Activated CD4-positive, alpha-beta memory T cell treated with anti-CD3 and anti-CD28 coated beads for 36 hours (primary cell): ENCODE measurements at regions of chrX and their contacts with region 1.

Region 1: GRCh38 chrX:153649178-153649914 is 2.3 kb downstream of the DUSP9 start:
- DNase-seq: peak; percentile 49
- H3K4me3 Mint-ChIP-seq: no peak overlapping the region
- H3K27ac Mint-ChIP-seq: no peak overlapping the region
- H3K4me1 Mint-ChIP-seq: no peaks in the 10 kb centered on the region
- H3K27me3 Mint-ChIP-seq: peaks cover 18% of the 10 kb centered on the region

Region 2: GRCh38 chrX:153539171-153539978 is 110.0 kb before region 1 on chrX:
- CTCF ChIA-PET with region 1: interaction called, 28 read pairs
- POLR2A ChIA-PET with region 1: interaction called, 3 read pairs
- intact Hi-C with region 1: no loop called
- DNase-seq: peak; percentile 69
- H3K4me3 Mint-ChIP-seq: no peak overlapping the region
- H3K27ac Mint-ChIP-seq: no peak overlapping the region
- H3K4me1 Mint-ChIP-seq: no peaks in the 10 kb centered on the region
- H3K27me3 Mint-ChIP-seq: peaks cover 2% of the 10 kb centered on the region

Region 3: GRCh38 chrX:153554519-153555167 is 94.7 kb before region 1 on chrX:
- CTCF ChIA-PET with region 1: interaction called, 12 read pairs
- POLR2A ChIA-PET with region 1: no interaction called
- intact Hi-C with region 1: loop called (anchors 5 kb)
- DNase-seq: peak; percentile 70
- H3K4me3 Mint-ChIP-seq: no peak overlapping the region
- H3K27ac Mint-ChIP-seq: no peak overlapping the region
- H3K4me1 Mint-ChIP-seq: no peaks in the 10 kb centered on the region
- H3K27me3 Mint-ChIP-seq: no peaks in the 10 kb centered on the region

Region 4: DNA sequence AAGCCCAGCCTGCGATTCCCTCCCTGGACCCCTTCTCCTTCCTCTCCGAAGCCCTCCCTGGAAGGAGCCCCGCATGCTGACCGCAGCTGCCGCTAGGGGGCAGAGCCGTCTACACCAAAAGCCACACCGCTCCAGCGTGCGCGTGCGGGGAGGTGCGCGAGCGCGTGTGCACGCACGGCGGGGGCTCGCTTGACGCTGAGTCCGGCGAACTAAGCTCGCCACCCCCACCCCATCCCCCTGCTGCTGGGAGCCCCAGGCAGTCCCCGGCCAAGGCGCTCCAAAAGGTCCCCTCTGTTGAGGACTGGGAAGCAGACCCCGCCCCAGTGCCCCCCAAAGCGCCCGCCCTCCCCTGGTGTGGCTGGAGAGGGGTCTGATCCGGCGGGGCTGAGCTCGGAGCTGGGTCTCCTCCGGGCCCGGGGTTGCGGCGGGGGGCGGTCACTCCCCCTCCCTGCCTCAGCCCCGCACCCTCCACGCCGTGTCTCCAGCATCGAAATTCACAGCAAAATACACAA is 39.4 kb before region 1 on chrX:
- CTCF ChIA-PET with region 1: interaction called, 17 read pairs
- POLR2A ChIA-PET with region 1: no interaction called
- intact Hi-C with region 1: loop called (anchors 5 kb)
- DNase-seq: peak; percentile 82
- H3K4me3 Mint-ChIP-seq: peak overlapping the region; percentile 71
- H3K27ac Mint-ChIP-seq: no peak overlapping the region
- H3K4me1 Mint-ChIP-seq: peaks cover 9% of the 10 kb centered on the region
- H3K27me3 Mint-ChIP-seq: no peaks in the 10 kb centered on the region

Region 5: DNA sequence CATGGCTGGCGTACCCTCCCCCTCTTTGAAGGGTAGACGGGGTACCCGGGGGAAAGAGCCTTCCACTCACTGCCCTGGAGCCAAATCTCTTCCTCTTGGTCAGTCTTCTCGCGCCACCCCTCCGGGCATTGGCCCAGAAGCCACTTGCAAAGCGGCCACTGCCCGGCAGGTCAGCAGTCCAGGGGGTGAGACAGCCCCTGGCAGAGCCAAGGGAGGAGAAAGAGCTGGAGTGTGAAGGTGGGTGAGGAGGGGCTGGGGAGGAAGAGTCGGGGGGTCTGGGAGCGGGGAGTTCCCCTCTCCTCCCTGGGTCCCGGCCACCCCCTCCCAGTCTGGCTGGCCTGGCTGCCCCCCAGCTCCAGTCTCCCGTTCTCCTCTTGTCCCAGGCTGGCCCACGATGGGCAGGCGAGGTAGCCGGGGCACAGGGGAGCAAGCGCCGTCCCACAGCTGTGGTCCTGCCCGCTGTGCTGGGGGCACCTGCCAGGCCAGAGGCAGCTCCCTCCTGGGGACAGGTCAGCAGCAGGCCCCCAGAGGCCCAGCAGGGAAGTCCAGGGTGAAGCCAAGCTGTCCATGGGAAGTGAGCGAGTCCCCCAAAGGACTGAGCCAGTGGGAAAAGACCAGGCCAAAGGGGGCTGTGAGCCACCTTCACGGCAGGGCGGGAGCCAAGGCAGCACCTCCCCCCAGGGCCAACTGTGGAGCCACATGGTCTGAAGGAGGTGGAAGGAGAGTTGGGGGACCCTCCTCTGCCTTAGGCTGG is 23.9 kb before region 1 on chrX:
- CTCF ChIA-PET with region 1: no interaction called
- POLR2A ChIA-PET with region 1: no interaction called
- intact Hi-C with region 1: no loop called
- DNase-seq: no peak
- H3K4me3 Mint-ChIP-seq: no peak overlapping the region
- H3K27ac Mint-ChIP-seq: no peak overlapping the region
- H3K4me1 Mint-ChIP-seq: no peaks in the 10 kb centered on the region
- H3K27me3 Mint-ChIP-seq: no peaks in the 10 kb centered on the region

Region 6: DNA sequence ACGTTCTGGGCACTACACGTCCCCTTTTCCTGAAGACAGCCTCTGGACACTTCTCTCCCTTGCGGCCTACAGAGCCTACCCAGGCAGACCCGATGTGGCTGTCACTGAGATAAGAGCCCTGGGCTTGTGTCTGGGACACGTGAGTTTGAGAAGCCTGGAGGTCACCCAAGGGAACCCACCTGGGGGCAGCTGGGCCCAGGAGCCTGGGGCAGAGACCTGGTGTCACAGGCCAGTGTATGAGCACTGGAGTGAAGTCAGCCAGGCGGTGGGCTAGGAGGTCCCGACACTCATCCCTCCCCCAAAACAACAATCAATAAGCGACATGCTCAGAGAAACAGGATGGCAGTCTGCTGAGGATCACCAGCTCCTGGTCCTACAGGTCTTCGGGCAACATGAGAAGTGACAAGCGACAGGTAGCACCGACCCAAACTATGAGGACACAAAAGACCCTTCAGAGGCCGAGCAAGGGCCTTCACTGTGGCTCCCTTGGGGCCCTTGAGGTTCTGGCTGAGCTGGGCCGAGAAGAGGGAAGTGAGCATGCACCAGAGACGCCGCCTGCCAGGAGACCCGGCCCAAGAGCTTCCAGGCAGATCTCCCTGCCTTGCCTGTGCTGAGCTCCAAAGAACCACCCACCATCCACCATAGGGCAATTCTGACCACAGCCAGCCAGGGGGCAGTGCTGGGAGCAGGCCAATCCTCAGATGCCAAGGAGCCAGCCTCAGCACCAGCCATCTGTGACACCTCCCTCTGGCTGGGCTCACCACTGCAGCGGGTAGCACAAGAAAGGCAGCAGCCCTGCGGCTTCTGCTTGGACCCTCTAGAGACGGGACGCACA is 13.3 kb before region 1 on chrX:
- CTCF ChIA-PET with region 1: interaction called, 10 read pairs
- POLR2A ChIA-PET with region 1: no interaction called
- intact Hi-C with region 1: no loop called
- DNase-seq: peak; percentile 35
- H3K4me3 Mint-ChIP-seq: no peak overlapping the region
- H3K27ac Mint-ChIP-seq: no peak overlapping the region
- H3K4me1 Mint-ChIP-seq: no peaks in the 10 kb centered on the region
- H3K27me3 Mint-ChIP-seq: peaks cover 2% of the 10 kb centered on the region

Region 7: GRCh38 chrX:153662266-153662665 is 12.9 kb after region 1 on chrX:
- CTCF ChIA-PET with region 1: interaction called, 31 read pairs
- POLR2A ChIA-PET with region 1: no interaction called
- intact Hi-C with region 1: no loop called
- DNase-seq: peak; percentile 66
- H3K4me3 Mint-ChIP-seq: peak overlapping the region; percentile 59
- H3K27ac Mint-ChIP-seq: no peak overlapping the region
- H3K4me1 Mint-ChIP-seq: no peaks in the 10 kb centered on the region
- H3K27me3 Mint-ChIP-seq: peaks cover 5% of the 10 kb centered on the region

Region 8: DNA sequence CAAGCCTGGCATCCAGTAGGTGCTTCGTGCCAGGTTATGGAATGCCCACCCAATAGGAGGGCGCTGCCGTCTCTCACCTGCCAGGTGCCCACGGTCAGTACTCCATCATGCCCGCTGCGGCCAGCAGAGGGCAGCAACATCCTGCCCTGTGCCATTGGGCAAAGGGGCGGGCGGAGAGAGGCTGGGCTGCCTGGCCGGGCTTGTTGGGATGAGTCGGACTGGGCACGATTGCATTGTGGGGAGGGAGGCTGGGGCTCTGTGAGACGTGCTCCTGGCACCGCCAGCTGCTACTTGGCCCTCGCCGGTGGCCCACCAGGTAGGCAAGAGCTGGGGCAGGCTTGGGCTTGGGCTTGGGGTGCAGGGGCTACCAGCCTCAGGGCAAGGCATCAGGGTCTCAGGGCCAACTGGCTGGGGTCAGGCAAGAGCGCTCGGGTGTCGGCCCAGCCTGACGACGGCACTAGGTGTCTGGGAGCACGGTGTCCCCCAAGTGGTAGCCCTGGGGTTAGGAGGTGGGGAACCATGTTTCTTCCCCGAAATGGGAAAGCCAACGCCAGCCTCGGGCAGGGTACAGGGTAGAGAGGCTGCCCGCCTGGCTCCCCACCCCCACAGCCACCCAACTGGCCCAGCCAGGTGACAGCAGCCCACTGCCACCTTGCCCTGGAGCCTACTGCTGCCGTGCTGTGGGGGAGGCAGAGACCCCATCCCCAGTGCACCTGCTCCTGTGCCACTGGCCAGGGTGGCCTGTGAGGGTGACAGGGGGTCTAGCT is 114.8 kb after region 1 on chrX and contains the start of gene PLXNB3:
- CTCF ChIA-PET with region 1: no interaction called
- POLR2A ChIA-PET with region 1: no interaction called
- intact Hi-C with region 1: no loop called
- DNase-seq: peak; percentile 84
- H3K4me3 Mint-ChIP-seq: no peak within 1 kb of the TSS
- H3K27ac Mint-ChIP-seq: no peak within 1 kb of the TSS
- H3K4me1 Mint-ChIP-seq: peaks cover 9% of the 10 kb centered on the region
- H3K27me3 Mint-ChIP-seq: no peaks in the 10 kb centered on the region
- total RNA-seq, gene PLXNB3: 0.29 to 0.69 TPM

Region 9: DNA sequence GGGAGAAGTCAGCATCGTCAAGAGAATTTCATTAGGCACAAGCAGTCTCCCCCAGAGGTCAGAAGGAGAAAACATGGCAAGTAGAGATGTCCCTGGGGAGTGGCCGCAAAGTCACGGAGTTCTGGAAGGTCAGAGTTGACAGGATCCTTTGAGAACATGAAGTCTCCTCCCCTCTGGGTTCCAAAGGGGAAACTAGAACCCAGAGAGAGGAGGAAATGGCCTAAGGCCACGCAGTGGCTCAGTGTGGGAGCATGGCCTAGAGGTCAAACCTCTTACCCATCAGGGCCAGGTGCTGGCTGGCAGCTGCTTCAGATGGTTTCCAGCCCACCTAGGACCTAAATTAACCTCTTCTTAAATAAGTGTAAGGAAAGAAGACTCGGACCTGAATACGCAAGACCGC is 143.9 kb after region 1 on chrX:
- CTCF ChIA-PET with region 1: no interaction called
- POLR2A ChIA-PET with region 1: no interaction called
- intact Hi-C with region 1: no loop called
- DNase-seq: no peak
- H3K4me3 Mint-ChIP-seq: peak overlapping the region; percentile 90
- H3K27ac Mint-ChIP-seq: peak overlapping the region; percentile 73
- H3K4me1 Mint-ChIP-seq: peaks cover 18% of the 10 kb centered on the region
- H3K27me3 Mint-ChIP-seq: no peaks in the 10 kb centered on the region